Activated CD8-positive, alpha-beta memory T cell treated with anti-CD3 and anti-CD28 coated beads, Interleukin-2, amount 10 ng/mL, durations not matched to agents 7 days and 5 days (primary cell): ENCODE measurements at regions of chr16 and their contacts with region 1.

Region 1: GRCh38 chr16:3106205-3106928 is 6.0 kb upstream of the ZNF205 start:
- DNase-seq: peak; percentile 97
- ATAC-seq: peak; percentile 95
- H3K4me3 Mint-ChIP-seq: peak overlapping the region; percentile 70
- H3K27ac Mint-ChIP-seq: peak overlapping the region; percentile 91
- H3K4me1 Mint-ChIP-seq: peaks cover 18% of the 10 kb centered on the region
- H3K27me3 Mint-ChIP-seq: peaks cover 3% of the 10 kb centered on the region

Region 2: DNA sequence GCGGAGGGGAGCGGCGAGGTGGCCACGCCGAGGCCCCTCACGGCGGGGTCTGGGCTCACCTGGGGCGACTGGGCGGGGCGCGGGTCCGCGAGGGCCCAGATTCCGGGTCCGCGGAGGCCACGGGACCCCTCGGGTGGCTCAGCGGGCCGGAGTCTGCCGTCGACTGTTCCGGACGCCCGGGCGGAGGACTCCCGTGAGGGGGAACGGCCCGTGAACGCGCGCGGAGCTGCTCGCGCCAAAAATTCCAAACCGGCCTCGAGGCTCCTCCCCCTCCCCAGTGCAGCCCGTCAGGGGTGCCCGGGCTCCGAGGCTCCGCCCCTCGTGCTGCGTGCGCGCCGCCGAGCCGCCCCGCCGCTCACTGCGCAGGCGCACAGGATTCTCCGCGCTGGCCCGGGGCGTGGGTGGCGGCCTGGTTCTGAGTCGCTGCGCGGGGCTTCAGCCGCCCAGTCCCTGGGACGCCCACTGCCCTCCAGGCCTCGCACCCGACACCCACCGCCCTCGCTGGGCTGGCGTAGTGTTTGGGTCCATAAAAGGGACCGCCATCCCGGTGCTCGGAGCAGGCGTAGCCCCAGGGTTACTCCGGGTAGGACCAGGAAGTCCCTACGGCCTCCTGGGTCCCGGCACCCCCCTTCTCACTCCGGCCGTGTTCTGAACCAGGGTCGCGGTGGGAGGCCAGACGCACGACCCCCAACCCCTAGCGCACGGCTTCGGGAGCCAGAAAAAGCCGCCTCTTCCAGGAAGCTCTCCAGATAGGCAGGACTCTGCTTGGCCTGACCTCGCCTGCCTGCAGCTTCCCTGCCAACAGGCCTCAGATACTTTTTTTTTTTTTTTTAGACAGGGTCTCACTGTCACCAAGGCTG is 125.9 kb before region 1 on chr16 and contains the start of gene PKMYT1:
- CTCF ChIA-PET with region 1: no interaction called
- DNase-seq: peak; percentile 96
- ATAC-seq: peak; percentile 90
- H3K4me3 Mint-ChIP-seq: peak within 1 kb of the TSS; percentile 93
- H3K27ac Mint-ChIP-seq: peak within 1 kb of the TSS; percentile 86
- H3K4me1 Mint-ChIP-seq: peaks cover 33% of the 10 kb centered on the region
- H3K27me3 Mint-ChIP-seq: peaks cover 4% of the 10 kb centered on the region
- total RNA-seq, gene PKMYT1: 146 to 199 TPM

Region 3: DNA sequence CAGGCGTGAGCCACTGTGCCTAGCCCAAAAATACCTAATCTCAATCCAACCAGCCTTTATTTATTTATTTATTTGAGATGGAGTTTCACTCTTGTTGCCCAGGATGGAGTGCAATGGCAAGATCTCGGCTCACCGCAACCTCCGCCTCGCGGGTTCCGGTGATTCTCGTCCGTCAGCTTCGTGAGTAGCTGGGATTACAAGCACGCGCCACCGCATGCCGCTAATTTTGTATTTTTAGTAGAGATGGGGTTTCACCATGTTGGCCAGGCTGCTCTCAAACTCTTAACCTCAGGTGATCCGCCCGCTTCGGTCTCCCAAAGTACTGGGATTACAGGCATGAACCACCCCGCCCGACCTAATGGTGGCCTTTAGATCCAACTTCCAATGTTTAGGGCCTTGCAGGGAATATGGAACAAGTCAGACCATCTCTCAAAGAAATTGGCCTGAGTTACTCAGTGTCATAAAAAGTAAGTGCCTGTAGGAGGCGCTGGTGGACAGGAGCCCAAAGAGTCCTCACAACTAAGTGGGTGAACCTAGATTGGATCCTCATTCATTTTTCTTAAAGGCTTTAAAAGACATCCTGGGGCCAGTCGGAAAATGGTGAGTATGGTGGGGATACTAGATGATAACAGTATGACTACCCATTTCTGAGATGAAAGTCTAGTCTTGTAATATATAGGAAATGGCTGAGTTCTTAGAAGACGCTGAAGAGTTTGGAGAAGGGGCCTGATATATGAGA is 11.9 kb before region 1 on chr16:
- CTCF ChIA-PET with region 1: interaction called, 22 read pairs
- DNase-seq: peak; percentile 73
- ATAC-seq: peak; percentile 26
- H3K4me3 Mint-ChIP-seq: no peak overlapping the region
- H3K27ac Mint-ChIP-seq: peak overlapping the region; percentile 69
- H3K4me1 Mint-ChIP-seq: peaks cover 46% of the 10 kb centered on the region
- H3K27me3 Mint-ChIP-seq: no peaks in the 10 kb centered on the region

Region 4: DNA sequence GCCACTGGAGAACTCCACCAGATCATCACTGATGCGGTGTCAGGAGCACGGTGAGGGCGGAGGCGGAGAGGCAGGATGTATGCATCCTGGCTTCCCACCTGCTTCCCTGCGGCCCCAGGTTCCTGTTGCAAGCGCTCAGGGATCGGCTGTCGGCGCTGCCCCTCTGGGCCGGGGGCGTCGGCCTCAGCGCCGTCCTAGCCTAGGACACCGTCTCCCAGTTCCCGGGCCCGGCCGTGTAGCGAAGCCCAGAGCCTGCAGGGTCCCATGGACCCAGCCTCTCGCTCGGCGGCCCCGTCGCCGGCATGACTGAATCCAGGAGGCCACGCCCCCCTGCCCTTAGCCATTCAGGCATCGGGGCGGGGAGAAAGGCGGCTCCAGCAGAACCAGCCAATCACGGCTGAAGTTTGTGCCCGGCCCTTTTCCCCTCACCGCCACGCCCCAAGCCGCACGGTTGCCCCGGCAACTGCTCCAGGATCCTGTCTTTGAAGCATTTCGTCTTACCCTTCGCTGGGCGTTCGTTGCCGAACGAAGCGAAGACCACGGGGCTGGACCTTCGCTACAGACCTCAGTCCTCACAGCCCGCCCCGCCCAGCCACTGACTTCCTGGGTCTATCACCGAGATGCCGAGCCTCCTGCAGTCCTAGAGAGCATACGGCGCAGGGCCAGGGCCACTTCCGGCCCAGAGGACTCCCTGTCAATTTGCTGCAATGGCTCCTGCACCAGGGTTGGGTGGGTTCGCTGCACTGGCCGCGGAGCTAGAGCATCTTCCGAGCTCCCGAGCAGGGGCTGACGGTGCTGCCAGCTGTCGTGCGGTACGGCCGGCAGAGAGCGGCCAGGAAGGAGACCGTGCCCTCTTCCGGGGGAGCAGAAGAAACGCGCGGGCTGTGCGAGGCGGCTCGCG is 17.9 kb after region 1 on chr16:
- CTCF ChIA-PET with region 1: interaction called, 400 read pairs
- DNase-seq: peak; percentile 99
- ATAC-seq: peak; percentile 88
- H3K4me3 Mint-ChIP-seq: peak overlapping the region; percentile 98
- H3K27ac Mint-ChIP-seq: peak overlapping the region; percentile 99
- H3K4me1 Mint-ChIP-seq: peaks cover 49% of the 10 kb centered on the region
- H3K27me3 Mint-ChIP-seq: no peaks in the 10 kb centered on the region

Region 5: DNA sequence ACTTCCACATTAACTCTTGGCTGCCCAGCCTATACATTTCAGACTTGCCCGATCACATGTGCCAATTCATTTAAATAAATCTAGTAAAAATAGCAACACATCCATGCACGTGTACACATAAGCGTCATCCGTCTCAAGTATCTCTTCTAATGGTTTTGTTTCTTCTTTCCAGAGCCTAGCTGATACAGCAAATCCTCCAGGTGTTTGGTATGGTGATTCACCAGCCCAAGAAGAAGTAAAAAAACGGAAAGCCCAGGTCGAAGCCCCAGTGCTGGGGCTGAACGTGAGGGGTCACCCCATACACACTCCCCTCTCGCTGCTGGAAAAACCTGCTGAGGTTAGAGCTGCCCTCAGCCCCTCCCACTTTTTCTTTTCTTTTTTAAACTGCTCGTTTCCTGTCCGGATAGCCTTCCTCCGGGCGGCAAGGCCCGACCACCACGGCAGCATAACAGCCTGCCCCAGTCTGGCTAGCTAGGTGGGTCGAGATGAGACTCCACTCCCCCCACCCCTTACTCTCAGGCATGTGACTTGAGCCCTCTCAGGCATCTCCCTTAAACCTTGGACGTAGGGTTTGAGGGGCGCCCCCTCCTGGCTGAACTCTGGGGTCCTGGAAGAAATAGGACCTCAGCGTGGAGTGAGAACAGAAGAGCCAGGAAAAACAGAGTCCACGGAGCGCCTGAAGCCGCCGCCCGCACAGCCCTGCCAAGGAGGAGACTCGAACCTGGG is 67.7 kb after region 1 on chr16:
- CTCF ChIA-PET with region 1: no interaction called
- DNase-seq: peak; percentile 58
- ATAC-seq: peak; percentile 13
- H3K4me3 Mint-ChIP-seq: peak overlapping the region; percentile 61
- H3K27ac Mint-ChIP-seq: no peak overlapping the region
- H3K4me1 Mint-ChIP-seq: peaks cover 38% of the 10 kb centered on the region
- H3K27me3 Mint-ChIP-seq: peaks cover 86% of the 10 kb centered on the region